Activated CD4-positive, alpha-beta memory T cell treated with anti-CD3 and anti-CD28 coated beads for 36 hours (primary cell): ENCODE measurements at regions of chr6 and their contacts with region 1.

Region 1: DNA sequence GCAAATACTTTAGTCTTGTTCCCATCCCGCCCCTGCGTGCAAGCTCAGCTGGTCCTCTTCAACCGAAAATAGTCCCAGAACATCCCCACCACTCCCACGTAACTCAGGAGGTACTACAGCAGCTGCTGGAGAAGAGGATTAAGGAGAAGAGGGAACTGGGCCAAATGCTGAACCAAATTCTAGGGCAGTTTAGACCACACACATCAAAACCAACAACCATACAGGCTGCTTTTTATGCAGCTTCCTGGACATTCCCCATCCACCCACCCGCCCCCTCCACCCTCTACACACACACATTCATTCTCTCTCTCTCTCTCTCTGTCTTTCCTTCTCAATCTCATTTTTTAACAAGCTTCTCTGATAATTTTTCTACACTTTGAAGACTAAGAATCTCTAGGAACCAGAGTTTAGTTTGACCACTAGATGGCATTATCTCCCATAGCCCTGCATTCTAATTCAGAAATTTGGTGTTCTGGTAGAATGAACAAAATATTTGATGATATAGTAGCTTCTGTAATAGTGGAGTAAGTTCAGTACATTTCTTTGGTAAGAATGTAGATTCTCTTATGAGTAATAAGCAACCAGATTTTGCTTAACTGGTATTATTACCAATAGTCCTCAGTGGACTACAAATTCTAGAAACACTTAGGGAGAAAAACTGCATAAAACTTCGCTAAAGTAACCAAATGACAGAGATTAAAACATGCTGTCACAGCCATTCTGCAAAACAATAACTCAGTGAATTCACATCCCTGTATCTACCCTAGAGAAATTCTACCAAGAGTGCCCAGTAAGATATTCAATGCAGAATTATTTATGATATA is 52.1 kb upstream of the BEND6 start:
- DNase-seq: no peak
- H3K4me3 Mint-ChIP-seq: no peak overlapping the region
- H3K27ac Mint-ChIP-seq: no peak overlapping the region
- H3K4me1 Mint-ChIP-seq: no peaks in the 10 kb centered on the region
- H3K27me3 Mint-ChIP-seq: peaks cover 13% of the 10 kb centered on the region

Region 2: DNA sequence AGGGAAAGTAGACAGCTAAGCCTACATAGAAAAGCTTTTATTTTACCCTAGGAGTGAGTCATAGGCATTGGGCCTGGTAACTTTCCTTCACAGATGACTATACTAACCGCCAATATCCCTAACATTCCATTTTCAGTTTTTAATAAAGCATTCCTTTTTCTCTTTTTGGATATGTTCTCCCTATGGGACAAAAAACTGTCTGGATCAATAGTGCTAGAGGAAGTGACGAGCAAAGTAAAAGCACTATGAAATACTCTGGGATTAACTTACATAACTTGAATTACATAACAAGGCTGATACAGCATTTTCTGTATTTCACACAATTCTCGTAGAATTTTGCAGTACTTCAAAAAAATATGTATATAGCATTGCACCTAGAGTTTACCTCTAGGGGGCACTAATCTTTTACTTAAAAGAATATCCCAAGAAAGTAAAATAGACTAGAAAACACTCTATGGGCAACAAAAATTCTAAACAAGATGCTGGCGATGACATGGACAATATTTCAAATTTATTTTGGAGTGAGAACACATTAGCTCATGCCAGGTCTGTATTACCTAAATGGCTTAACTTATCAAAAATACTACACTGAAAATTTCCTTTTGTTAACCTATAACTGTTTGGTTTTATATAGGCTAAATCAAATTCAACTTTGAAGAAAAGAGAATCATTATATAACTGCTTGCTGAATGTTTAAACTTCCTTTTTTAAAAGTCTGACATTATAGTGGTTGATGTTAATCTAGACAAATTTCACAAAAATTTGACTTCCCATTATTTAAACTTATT is 193.8 kb before region 1 on chr6:
- CTCF ChIA-PET with region 1: interaction called, 4 read pairs
- POLR2A ChIA-PET with region 1: no interaction called
- intact Hi-C with region 1: loop called (anchors 5 kb)
- DNase-seq: no peak
- H3K4me3 Mint-ChIP-seq: no peak overlapping the region
- H3K27ac Mint-ChIP-seq: no peak overlapping the region
- H3K4me1 Mint-ChIP-seq: no peaks in the 10 kb centered on the region
- H3K27me3 Mint-ChIP-seq: no peaks in the 10 kb centered on the region

Region 3: DNA sequence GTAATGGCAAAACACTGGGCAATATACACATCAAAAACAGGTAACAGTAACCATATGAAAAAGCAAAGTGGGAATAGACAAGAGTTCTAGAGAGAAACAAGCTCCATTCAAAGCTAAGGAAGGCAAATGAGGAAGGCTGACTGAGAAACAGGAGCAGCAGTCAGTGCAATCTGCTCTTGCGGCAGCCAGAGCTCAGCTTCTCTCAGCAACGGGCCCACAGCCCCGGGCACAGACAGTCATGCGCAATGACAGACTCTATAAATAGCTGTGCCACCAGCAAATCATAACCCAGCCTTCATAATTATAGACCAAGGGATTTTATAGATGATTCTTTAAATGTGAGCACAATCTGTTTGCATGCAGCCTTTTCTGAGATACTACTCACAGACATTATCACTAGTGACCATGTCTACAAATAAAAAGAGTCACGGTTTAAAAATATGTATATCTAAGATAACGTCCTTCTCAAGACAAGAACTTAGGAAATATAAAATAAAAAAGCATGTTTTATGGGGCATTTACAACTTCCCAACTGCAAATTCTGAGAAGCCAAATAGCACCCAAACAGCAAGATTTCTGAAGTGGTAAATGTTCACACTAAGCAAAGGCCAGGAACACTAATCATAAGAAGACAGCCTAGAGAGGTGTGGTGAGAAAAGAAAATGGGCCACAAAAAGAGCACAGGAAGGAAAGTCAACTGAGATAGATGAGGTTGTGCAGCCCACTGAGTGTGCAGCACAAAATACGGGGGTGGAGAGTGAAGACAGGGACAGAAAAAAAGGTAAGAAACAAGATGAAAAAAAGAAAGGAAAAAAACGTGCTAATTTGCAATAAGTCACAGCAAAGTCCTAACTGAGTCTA is 12.2 kb after region 1 on chr6:
- CTCF ChIA-PET with region 1: interaction called, 14 read pairs
- POLR2A ChIA-PET with region 1: no interaction called
- intact Hi-C with region 1: no loop called
- DNase-seq: no peak
- H3K4me3 Mint-ChIP-seq: no peak overlapping the region
- H3K27ac Mint-ChIP-seq: no peak overlapping the region
- H3K4me1 Mint-ChIP-seq: no peaks in the 10 kb centered on the region
- H3K27me3 Mint-ChIP-seq: peaks cover 9% of the 10 kb centered on the region

Region 4: DNA sequence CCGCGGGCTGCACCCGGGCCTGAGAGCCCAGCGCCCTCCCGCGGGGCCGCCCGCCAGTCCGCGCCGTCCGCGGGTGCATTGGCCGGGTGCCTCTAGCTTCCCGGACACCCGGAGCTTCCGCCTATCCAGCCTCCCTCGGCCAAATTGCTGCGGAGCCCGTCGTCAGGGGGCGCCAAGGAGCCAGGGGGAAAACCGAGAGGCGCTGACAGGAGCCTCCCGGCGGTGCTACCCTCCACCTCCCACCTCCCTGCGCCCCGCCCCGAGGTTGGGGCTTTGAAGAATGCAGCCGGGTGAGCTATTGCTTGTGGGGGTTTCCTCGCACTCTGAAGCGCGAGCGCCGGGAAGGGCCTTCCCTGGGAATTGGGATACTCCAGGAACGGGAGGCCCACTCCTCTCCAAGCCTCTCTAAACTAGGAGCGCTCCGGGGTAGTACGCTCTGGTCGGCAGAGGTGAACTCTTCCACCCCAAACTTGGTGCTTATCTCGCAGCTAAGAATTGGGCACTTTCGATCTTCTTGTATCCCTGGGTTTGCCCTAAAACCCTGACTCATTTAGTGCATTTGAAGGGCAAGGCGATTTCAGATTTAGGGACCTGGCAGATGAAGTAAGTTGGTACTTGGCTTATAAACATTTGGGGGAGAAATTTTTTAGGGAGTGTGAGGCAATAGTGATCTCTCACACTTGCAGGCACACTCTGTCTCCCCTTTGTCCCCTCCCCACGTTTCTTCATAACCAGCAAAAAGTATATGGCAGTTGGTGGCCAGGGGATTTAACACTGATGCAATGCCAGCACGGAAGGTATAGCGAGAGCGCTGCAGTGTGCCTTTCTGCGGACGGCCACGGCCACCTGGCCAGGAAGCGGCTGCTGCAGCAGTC is 52.6 kb after region 1 on chr6:
- CTCF ChIA-PET with region 1: interaction called, 13 read pairs
- POLR2A ChIA-PET with region 1: no interaction called
- intact Hi-C with region 1: loop called (anchors 1 kb)
- DNase-seq: peak; percentile 81
- H3K4me3 Mint-ChIP-seq: peak overlapping the region; percentile 72
- H3K27ac Mint-ChIP-seq: no peak overlapping the region
- H3K4me1 Mint-ChIP-seq: peaks cover 21% of the 10 kb centered on the region
- H3K27me3 Mint-ChIP-seq: peaks cover 45% of the 10 kb centered on the region

Region 5: DNA sequence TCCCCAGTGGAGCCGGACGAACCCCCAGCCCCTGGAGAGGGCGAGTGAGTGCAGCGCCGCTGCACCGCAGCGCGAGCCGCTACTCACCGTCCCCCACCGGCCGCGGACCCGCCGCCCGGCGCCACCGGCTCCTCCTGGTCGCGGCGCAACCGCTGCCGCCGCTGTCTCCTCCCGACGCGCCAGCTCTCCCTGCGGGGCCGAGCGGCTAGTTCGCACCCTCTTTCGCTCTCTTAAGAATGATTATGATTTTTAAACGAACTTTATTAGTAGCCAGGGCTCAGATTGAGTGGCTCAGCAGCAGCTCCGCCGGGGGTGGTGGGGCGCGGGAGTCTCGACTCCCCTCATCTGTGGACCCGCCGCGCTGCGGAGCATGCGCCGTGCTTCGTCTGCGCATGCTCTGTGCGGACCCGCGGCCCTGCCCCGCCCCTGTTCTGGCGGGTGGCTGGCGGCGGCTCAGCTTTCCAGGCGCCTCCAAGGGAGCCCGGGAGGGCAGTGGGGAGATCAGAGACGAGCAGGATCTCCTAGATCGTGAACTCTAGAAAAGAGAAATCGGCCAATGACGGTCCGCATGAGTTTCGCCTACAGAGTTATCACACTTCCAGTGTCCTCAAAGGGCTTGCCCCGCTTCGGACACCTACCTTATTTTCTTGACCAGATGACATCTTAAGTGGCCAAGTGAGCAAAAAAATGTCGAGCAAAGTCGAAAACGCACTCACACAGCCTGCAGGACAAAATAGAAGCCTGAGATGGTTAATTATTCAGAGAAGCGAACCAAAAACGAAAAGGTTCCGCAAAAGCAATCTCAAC is 319.3 kb after region 1 on chr6 and contains the start of gene RAB23:
- CTCF ChIA-PET with region 1: no interaction called
- POLR2A ChIA-PET with region 1: no interaction called
- intact Hi-C with region 1: loop called (anchors 5 kb)
- DNase-seq: peak; percentile 85
- H3K4me3 Mint-ChIP-seq: peak within 1 kb of the TSS; percentile 98
- H3K27ac Mint-ChIP-seq: peak within 1 kb of the TSS; percentile 77
- H3K4me1 Mint-ChIP-seq: peaks cover 10% of the 10 kb centered on the region
- H3K27me3 Mint-ChIP-seq: peaks cover 16% of the 10 kb centered on the region
- total RNA-seq, gene RAB23: 1.7 to 2.2 TPM